ENCODE measurements at regions of chr2 and their contacts with region 1.

Region 1: GRCh38 chr2:64330281-64331113 is 123.5 kb upstream of the LGALSL start:
- H3K4me3 Mint-ChIP-seq: no peak overlapping the region
- H3K27ac Mint-ChIP-seq: no peak overlapping the region
- H3K4me1 Mint-ChIP-seq: peaks cover 29% of the 10 kb centered on the region
- H3K27me3 Mint-ChIP-seq: peaks cover 2% of the 10 kb centered on the region

Region 2: GRCh38 chr2:64288321-64289193 is 41.9 kb before region 1 on chr2:
- intact Hi-C with region 1: no loop called
- H3K4me3 Mint-ChIP-seq: no peak overlapping the region
- H3K27ac Mint-ChIP-seq: no peak overlapping the region
- H3K4me1 Mint-ChIP-seq: no peaks in the 10 kb centered on the region
- H3K27me3 Mint-ChIP-seq: no peaks in the 10 kb centered on the region

Region 3: GRCh38 chr2:64488050-64488974 is 157.8 kb after region 1 on chr2:
- intact Hi-C with region 1: loop called (anchors 1 kb)
- H3K4me3 Mint-ChIP-seq: no peak overlapping the region
- H3K27ac Mint-ChIP-seq: no peak overlapping the region
- H3K4me1 Mint-ChIP-seq: peaks cover 20% of the 10 kb centered on the region
- H3K27me3 Mint-ChIP-seq: peaks cover 17% of the 10 kb centered on the region

Region 4: GRCh38 chr2:64562148-64562784 is 231.8 kb after region 1 on chr2:
- intact Hi-C with region 1: loop called (anchors 2 kb)
- H3K4me3 Mint-ChIP-seq: no peak overlapping the region
- H3K27ac Mint-ChIP-seq: no peak overlapping the region
- H3K4me1 Mint-ChIP-seq: peaks cover 6% of the 10 kb centered on the region
- H3K27me3 Mint-ChIP-seq: no peaks in the 10 kb centered on the region